Dendritic cell treated with granulocyte-macrophage colony-stimulating factor and Interleukin-4, amounts not matched to agents 40 ng/mL and 50 ng/mL, for 4 days (primary cell): ENCODE measurements at regions of chr3 and their contacts with region 1.

Region 1: DNA sequence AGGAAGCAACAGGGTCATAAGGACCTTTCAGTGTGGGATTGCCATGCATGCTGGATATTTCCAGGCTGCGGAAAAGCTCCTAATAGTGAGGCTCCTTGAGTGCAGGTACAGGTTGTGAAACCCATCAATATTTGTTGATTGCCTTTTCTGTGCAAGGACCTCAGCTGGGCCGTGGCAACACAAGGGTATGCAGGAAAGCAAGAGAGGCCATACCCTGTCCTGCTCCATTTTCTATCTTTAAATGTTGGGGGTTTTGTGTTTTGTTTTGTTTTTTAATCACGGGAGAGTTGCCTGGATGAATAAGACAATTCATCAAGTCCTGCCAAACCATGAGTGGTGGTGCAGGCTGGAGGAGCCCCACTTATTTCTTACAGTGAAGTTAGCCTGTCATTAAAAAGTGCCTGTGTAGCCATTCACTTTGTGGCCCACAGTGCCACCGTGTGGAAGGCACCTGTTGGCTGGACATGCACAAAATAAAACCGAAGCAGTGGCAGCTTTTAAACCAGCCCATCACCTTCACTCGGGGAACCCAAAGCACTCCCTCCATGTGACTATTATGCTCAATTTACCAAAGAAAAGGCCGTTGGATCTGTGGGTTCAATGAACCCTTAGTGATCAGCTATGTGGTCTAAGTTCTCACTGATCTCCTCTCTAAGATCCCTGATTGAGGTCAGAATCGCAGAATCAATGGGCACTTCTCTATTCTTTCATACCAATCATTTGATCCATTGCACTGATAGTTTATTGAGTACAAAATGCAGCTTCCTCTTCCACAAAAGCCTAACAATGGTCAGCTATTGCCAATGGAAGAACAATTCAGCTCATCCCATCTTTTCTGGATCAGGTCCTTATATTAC is 42.2 kb downstream of the CLDN18 start:
- H3K4me3 Mint-ChIP-seq: no peak overlapping the region
- H3K27ac Mint-ChIP-seq: no peak overlapping the region
- H3K4me1 Mint-ChIP-seq: no peaks in the 10 kb centered on the region
- H3K27me3 Mint-ChIP-seq: no peaks in the 10 kb centered on the region

Region 2: DNA sequence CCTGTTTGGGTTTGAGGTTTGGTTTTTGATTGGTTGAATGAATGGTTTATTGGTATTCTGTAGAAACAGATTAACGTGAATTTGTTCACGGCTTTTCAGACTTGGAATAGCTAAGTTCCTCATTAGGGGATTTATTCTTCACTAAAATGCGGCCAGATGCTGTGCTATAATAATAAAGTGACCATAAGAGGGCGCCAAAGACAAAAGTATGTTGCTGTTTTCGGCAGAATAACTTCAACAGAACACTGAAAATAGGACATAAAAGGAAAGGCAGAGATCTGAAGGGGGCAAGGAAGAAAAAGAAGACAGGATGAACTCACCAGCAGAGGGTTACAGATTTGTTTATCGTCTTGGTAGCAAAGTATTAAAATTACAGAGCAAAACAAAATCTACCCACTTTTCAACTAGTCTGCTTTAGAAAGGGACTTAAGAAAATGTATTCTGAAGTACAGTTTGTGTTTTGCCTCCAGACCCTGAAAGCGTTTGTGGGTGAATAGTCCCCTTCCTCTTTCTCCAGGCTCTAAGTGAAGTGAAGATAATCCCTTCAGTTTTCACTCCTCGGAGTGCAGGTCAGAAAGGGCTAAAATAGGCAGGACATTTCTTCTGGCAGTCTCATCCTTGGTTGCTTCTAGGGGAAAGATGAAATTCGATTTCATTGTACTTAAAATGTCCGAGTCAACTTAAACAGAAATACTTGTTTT is 946.7 kb before region 1 on chr3:
- intact Hi-C with region 1: loop called (anchors 10 kb)
- H3K4me3 Mint-ChIP-seq: no peak overlapping the region
- H3K27ac Mint-ChIP-seq: no peak overlapping the region
- H3K4me1 Mint-ChIP-seq: no peaks in the 10 kb centered on the region
- H3K27me3 Mint-ChIP-seq: peaks cover 5% of the 10 kb centered on the region

Region 3: DNA sequence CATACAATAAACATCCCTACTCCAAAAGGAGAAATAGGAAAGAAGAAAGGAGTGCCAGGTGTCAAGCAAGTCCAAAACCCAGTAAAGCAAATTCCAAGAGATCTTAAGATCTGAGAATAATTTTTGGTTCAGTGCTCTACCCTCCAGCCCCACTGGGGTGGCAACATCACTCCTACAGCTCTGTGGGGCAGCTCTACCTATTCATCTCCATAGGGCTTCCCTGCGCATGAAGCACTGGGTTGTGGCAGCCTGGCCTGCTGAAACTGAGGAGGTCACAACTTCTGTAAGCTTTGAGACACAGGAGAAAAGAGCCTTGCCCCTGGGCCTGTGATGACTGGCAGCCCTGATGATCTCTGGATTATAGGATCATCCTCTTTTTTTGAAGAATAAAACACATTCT is 666.3 kb before region 1 on chr3:
- intact Hi-C with region 1: no loop called
- H3K4me3 Mint-ChIP-seq: no peak overlapping the region
- H3K27ac Mint-ChIP-seq: no peak overlapping the region
- H3K4me1 Mint-ChIP-seq: no peaks in the 10 kb centered on the region
- H3K27me3 Mint-ChIP-seq: no peaks in the 10 kb centered on the region

Region 4: GRCh38 chr3:137854533-137855280 is 197.5 kb before region 1 on chr3:
- intact Hi-C with region 1: no loop called
- H3K4me3 Mint-ChIP-seq: no peak overlapping the region
- H3K27ac Mint-ChIP-seq: no peak overlapping the region
- H3K4me1 Mint-ChIP-seq: no peaks in the 10 kb centered on the region
- H3K27me3 Mint-ChIP-seq: peaks cover 1% of the 10 kb centered on the region

Region 5: GRCh38 chr3:137958635-137959034 is 93.5 kb before region 1 on chr3:
- intact Hi-C with region 1: no loop called
- H3K4me3 Mint-ChIP-seq: no peak overlapping the region
- H3K27ac Mint-ChIP-seq: no peak overlapping the region
- H3K4me1 Mint-ChIP-seq: no peaks in the 10 kb centered on the region
- H3K27me3 Mint-ChIP-seq: peaks cover 9% of the 10 kb centered on the region

Region 6: DNA sequence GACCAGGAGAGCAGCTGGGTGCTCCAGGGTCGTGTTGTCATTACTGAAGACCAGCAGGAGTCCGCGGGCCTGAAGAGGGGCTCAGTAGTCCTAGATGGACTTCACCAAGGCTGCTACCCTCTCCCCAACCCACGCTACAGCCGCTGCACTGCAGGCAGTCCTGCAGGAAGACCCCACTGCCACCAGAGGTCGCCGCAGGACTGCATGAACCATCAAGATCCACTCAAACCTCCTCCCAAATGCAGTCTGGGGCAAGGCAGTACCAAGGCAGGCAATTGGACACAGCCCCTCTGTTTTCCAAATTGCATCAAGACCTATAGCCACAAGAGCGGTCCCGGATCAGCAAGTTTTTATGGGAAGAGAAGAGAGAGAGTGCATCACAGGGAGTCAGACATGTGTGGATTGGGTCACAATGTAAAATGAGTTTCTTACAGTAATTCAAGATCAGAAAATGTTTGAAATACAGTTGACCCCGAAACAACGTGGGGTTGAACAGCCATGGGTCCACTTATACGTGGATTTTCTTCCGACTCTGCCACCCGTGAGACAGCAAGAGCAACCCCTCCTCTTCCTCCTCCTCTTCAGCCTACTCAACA is 16.5 kb after region 1 on chr3:
- intact Hi-C with region 1: no loop called
- H3K4me3 Mint-ChIP-seq: no peak overlapping the region
- H3K27ac Mint-ChIP-seq: no peak overlapping the region
- H3K4me1 Mint-ChIP-seq: peaks cover 10% of the 10 kb centered on the region
- H3K27me3 Mint-ChIP-seq: no peaks in the 10 kb centered on the region